ENCODE measurements at regions of chr1 and their contacts with region 1.

Region 1: GRCh38 chr1:224051086-224051406 is 62.9 kb upstream of the FBXO28 start:
- DNase-seq: no peak
- ATAC-seq: no peak
- H3K4me3 ChIP-seq: no peak overlapping the region
- H3K4me3 Mint-ChIP-seq: no peak overlapping the region
- H3K27ac ChIP-seq: no peak overlapping the region
- H3K27ac Mint-ChIP-seq: no peak overlapping the region
- H3K4me1 ChIP-seq: peaks cover 3% of the 10 kb centered on the region
- H3K4me1 Mint-ChIP-seq: no peaks in the 10 kb centered on the region
- H3K27me3 ChIP-seq: no peaks in the 10 kb centered on the region
- H3K27me3 Mint-ChIP-seq: peaks cover 9 to 13% of the 10 kb centered on the region in 2 donors
- CTCF ChIP-seq: peak; percentile 11

Region 2: DNA sequence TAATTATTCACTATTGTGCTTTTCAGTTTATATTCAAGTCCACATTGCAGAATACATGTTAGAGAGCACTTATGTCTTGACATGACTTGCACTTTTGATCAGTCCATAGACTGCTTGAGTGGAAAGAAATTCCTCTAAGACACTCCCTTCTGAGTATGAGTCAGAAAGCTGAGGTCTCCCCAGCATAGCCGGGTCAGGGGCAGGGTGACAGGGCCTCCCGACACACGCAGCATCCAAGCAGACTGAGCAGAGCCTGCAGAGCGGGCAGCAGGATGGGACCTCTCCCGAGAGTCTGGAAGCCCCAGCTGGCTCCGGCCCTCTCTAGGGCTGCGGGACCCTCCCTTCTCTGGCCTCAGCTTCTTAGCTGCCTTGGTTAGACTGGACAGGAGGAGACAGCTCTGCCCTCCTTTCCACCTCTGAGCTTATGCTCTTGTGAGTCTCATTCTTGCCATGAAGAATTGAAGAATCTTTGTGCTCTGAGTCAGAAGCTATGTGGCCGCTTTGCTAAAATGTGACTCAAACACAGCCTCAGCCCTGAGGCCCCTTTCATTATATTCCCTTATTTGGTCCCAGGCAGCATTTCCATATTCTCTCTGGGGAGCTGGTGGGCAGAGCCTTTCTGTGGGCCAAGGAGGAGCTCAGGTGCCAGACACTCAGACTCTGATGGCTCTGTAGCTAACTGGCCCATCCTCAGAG is 350.0 kb before region 1 on chr1:
- intact Hi-C with region 1: loop called (anchors 2 kb)
- DNase-seq: no peak
- ATAC-seq: no peak
- H3K4me3 ChIP-seq: no peak overlapping the region
- H3K4me3 Mint-ChIP-seq: no peak overlapping the region
- H3K27ac ChIP-seq: no peak overlapping the region
- H3K27ac Mint-ChIP-seq: no peak overlapping the region
- H3K4me1 ChIP-seq: peaks cover 4% of the 10 kb centered on the region
- H3K4me1 Mint-ChIP-seq: peaks cover 17 to 23% of the 10 kb centered on the region in 2 donors
- H3K27me3 ChIP-seq: no peaks in the 10 kb centered on the region
- H3K27me3 Mint-ChIP-seq: no peaks in the 10 kb centered on the region
- CTCF ChIP-seq: no peak

Region 3: DNA sequence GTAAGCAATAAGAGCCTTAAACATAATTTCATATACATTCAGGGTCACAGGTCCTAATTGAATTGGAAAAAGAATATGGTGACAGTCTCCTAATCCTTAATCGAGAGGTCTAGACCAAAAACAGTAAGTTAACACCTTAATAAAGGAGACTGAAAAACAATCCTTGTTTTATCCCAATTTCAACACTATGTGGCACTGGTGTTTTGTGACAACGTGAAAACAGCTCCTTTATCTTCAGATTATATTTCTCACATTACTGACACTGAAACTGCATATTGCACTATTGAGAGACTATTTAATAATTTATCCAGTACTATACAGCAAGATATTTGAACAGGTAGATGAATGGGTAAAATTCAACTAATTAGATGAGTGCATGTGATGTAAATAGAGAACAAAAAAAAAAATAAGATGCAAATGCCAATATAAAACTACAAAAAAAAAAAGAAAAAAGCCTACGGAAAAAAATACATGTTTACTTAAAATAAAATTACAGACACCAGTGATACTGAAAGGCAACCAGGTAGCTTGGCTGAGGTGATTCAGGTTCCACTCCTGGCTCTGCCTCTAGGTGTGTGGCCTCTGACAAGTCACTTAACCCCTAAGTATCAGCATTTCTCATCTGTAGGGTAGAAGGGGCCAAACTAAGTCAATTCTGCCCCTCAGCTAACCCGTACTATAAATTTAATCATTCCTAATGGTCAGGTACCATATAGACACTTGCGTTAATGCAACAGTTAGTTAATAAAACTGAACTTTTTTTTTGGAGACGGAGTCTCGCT is 239.2 kb before region 1 on chr1:
- intact Hi-C with region 1: loop called (anchors 2 kb)
- DNase-seq: peak in 1 of 2 donors; percentile 68
- ATAC-seq: peak; percentile 64 to 69 (median 66)
- H3K4me3 ChIP-seq: no peak overlapping the region
- H3K4me3 Mint-ChIP-seq: no peak overlapping the region
- H3K27ac ChIP-seq: no peak overlapping the region
- H3K27ac Mint-ChIP-seq: peak overlapping the region in 1 of 2 donors; percentile 23
- H3K4me1 ChIP-seq: no peaks in the 10 kb centered on the region
- H3K4me1 Mint-ChIP-seq: peaks cover 21 to 23% of the 10 kb centered on the region in 2 donors
- H3K27me3 ChIP-seq: no peaks in the 10 kb centered on the region
- H3K27me3 Mint-ChIP-seq: no peaks in the 10 kb centered on the region
- CTCF ChIP-seq: peak; percentile 32

Region 4: DNA sequence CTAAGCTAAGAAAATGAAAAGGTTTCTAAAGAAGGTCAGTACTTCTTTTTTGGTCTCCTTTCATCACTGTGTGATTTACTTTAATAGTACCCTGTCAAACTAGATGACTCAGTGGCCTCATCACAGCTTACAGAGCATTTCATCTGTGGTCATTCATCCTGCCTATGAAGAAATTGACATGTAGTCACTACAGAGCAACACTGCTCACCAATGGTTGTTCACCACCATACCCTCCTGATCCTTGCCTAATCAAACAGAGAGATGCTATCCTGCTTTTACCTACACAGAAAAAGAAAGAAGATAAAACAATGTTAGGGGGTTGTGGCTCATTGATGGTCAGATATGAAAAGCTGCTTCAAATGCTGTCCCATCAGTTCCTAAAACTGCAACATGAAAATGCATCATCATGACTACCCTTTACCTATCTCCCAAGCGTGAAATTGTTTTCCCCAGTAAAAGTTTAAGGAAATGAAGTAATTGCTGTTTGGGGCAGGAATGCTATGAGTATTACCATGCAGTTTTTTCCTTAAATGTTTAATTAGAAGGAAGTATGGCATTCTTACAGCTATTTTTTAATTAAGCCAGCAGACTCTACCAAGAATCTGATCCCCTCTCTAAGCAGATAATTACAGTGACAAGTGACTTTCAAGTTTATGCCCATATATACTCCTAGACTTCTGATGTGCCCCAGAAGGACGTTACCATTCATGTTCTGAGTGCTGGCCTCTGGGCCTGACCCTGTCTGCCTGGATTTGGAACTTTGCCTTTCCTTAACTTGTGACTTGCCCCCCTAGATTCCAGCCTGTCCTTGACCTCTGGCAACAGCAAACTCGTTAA is 16.8 kb after region 1 on chr1:
- intact Hi-C with region 1: no loop called
- DNase-seq: no peak
- ATAC-seq: peak in 1 of 3 donors; percentile 70
- H3K4me3 ChIP-seq: no peak overlapping the region
- H3K4me3 Mint-ChIP-seq: no peak overlapping the region
- H3K27ac ChIP-seq: no peak overlapping the region
- H3K27ac Mint-ChIP-seq: no peak overlapping the region
- H3K4me1 ChIP-seq: no peaks in the 10 kb centered on the region
- H3K4me1 Mint-ChIP-seq: no peaks in the 10 kb centered on the region
- H3K27me3 ChIP-seq: no peaks in the 10 kb centered on the region
- H3K27me3 Mint-ChIP-seq: peaks cover 11 to 58% of the 10 kb centered on the region in 2 donors
- CTCF ChIP-seq: no peak

Region 5: DNA sequence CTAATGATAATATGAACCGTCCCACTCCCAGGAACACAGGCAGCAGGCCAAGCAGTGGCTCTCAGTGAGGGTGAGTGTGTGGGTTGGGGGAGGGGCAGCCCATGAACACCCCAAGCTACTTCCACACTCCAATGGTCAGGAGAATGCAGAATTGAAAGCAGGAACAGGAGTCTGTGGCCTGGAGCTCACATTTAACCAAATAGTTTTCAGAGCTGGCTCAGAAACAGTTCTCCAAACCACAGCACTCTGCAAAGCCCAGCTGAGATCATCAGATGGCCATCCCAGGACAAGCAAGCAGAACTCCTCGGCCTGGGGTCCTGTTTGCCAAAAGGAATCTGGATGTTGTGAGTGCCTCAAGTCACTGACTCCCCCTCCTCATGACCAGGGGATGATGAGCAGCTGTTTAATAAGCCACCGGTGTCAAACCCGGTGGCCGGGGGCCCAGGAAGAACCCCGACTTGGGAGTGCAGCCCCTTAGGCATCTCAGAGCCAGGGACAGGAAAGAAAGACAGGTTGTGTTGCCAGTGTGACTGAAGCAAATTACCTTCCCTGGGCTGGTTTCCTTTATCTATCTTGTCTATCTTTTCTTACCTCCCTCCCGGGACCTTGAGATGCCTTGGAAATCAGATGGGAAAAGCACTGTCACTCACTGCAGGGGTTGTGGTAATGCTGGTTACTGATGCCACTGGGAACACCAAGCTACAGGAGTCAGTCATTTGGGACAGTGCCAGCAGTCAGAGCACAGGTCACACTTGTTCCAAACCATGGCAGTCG is 152.4 kb after region 1 on chr1:
- intact Hi-C with region 1: no loop called
- DNase-seq: no peak
- ATAC-seq: no peak
- H3K4me3 ChIP-seq: no peak overlapping the region
- H3K4me3 Mint-ChIP-seq: no peak overlapping the region
- H3K27ac ChIP-seq: no peak overlapping the region
- H3K27ac Mint-ChIP-seq: no peak overlapping the region
- H3K4me1 ChIP-seq: peaks cover 27% of the 10 kb centered on the region
- H3K4me1 Mint-ChIP-seq: peaks cover 13 to 15% of the 10 kb centered on the region in 2 donors
- H3K27me3 ChIP-seq: no peaks in the 10 kb centered on the region
- H3K27me3 Mint-ChIP-seq: no peaks in the 10 kb centered on the region
- CTCF ChIP-seq: no peak